Heart right ventricle (tissue), 16 donors: ENCODE measurements at regions of chr1 and their contacts with region 1.

Region 1: GRCh38 chr1:45569962-45570581 is 13.8 kb upstream of the NASP start:
- DNase-seq: peak; percentile 34 to 72
- ATAC-seq: peak; percentile 74 to 88 (median 82)
- H3K4me3 ChIP-seq: no peak overlapping the region
- H3K27ac ChIP-seq: no peak overlapping the region
- H3K4me1 ChIP-seq: peaks cover 0 to 17% (median 12%) of the 10 kb centered on the region in 9 donors
- H3K27me3 ChIP-seq: no peaks in the 10 kb centered on the region
- CTCF ChIP-seq: peak; percentile 88 to 99 (median 98)

Region 2: GRCh38 chr1:45359882-45360513 is 210.1 kb before region 1 on chr1:
- intact Hi-C with region 1: loop called in 8 of 10 experiments (anchors 2 to 10 kb)
- DNase-seq: peak; percentile 33 to 80
- ATAC-seq: peak; percentile 72 to 92 (median 86)
- H3K4me3 ChIP-seq: peak overlapping the region in 3 of 10 donors; percentile 15 to 16 (median 16)
- H3K27ac ChIP-seq: peak overlapping the region in 9 of 10 donors; percentile 55 to 78 (median 73)
- H3K4me1 ChIP-seq: peaks cover 0 to 23% (median 11%) of the 10 kb centered on the region in 9 donors
- H3K27me3 ChIP-seq: no peaks in the 10 kb centered on the region
- CTCF ChIP-seq: peak; percentile 58 to 86 (median 78)

Region 3: GRCh38 chr1:45512641-45513054 is 57.4 kb before region 1 on chr1:
- intact Hi-C with region 1: loop called (anchors 1 to 5 kb)
- DNase-seq: peak in 1 of 2 donors; percentile 65
- ATAC-seq: peak; percentile 48 to 81 (median 61)
- H3K4me3 ChIP-seq: no peak overlapping the region
- H3K27ac ChIP-seq: no peak overlapping the region
- H3K4me1 ChIP-seq: peaks cover 0 to 44% (median 20%) of the 10 kb centered on the region in 9 donors
- H3K27me3 ChIP-seq: no peaks in the 10 kb centered on the region
- CTCF ChIP-seq: peak; percentile 29 to 78 (median 72)

Region 4: DNA sequence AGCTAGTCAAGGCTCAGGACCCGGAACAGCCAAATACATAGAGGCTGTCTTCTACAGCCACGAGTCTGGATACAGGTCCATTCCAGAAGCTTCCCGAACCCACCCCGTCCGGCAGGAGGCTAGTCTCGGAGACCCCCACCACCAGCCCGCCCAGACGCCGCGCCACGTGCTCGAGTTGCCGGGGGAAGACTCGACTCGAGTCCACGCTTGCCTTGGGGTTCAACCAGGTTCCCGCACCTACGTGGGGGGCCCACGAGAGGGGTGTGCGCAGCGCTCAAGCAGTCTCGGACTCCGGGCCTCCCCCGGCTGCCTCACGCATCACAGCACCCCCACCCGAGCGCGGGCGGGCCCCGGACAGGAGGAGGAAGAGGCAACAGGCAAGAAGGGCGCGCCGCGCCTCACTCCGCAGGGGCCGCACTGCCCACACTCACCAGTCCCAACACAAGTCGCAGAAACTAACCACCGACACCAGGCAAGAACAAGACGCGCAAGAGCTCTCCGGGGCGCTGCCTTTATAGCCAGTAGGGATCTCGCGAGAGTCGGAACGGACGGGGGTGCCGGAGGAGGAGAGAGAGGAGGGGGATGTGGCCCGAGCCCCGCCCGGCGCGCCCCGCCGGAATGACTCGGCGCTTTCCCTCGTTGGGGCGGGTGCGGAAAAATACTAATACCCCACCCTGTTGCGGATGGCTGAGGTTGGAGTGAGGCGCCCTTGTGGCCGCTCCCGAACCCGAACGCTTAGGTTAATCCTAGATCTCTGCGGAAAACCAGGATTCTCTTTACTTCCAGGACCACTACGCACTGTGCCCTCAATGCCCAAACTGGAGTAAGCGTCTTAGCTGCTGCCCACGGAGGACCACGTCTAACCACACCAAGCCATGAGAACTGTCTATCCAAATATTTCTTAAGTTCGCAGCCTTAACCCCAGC is 48.4 kb before region 1 on chr1 and contains the start of gene PRDX1:
- intact Hi-C with region 1: loop called in 1 of 10 experiments (anchors 5 kb)
- DNase-seq: peak; percentile 98
- ATAC-seq: peak; percentile 96 to 98 (median 97)
- H3K4me3 ChIP-seq: peak within 1 kb of the TSS; percentile 58 to 96 (median 86)
- H3K27ac ChIP-seq: peak within 1 kb of the TSS; percentile 73 to 98 (median 93)
- H3K4me1 ChIP-seq: peaks cover 2 to 44% (median 25%) of the 10 kb centered on the region in 9 donors
- H3K27me3 ChIP-seq: peaks cover 0 to 7% (median 0%) of the 10 kb centered on the region in 7 donors
- CTCF ChIP-seq: peak in 4 of 9 donors; percentile 7 to 37 (median 28)
- total RNA-seq, gene PRDX1: 212 to 421 (median 289) TPM